PC-9 (cell line): ENCODE measurements at regions of chr3 and their contacts with region 1.

Region 1: GRCh38 chr3:46603416-46604046 is 8.8 kb upstream of the FAM240A start:
- DNase-seq: no peak
- H3K4me3 ChIP-seq: no peak overlapping the region
- H3K27ac ChIP-seq: no peak overlapping the region
- H3K4me1 ChIP-seq: no peaks in the 10 kb centered on the region
- H3K27me3 ChIP-seq: no peaks in the 10 kb centered on the region
- CTCF ChIP-seq: no peak

Region 2: GRCh38 chr3:46619845-46620778 is 16.6 kb after region 1 on chr3:
- CTCF ChIA-PET with region 1: no interaction called
- POLR2A ChIA-PET with region 1: no interaction called
- intact Hi-C with region 1: loop called (anchors 1 kb)
- DNase-seq: no peak
- H3K4me3 ChIP-seq: no peak overlapping the region
- H3K27ac ChIP-seq: no peak overlapping the region
- H3K4me1 ChIP-seq: no peaks in the 10 kb centered on the region
- H3K27me3 ChIP-seq: peaks cover 4% of the 10 kb centered on the region; the same call in 1 of the 2 replicates
- CTCF ChIP-seq: no peak

Region 3: DNA sequence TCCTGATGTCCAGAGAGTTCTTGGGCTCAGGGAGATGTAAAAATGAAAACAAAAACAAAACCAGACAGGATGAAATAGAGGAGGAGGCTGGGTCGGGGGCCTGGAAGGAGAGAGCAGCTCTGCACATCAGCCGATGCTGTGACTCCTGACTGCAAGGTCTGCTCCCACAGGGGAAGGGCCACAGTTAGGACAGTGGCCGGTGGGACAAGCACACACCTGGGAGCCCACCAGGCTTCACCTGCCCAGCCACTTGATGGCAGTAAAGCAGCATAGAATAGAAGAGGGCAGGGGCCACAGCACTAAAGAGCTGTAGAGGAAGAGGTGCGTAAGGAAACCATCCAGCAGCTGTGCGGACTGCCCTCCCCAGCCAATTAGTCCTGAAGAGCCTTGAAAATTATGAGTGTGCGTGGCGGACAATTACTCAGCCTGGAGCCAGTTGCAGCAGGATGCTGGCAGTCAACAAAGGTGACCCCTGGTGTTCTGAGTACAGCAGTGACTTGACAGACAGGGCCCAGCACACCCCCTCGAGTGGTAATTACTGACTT is 60.1 kb after region 1 on chr3:
- CTCF ChIA-PET with region 1: no interaction called
- POLR2A ChIA-PET with region 1: no interaction called
- intact Hi-C with region 1: no loop called
- DNase-seq: no peak
- H3K4me3 ChIP-seq: no peak overlapping the region
- H3K27ac ChIP-seq: no peak overlapping the region
- H3K4me1 ChIP-seq: peaks cover 28% of the 10 kb centered on the region
- H3K27me3 ChIP-seq: no peaks in the 10 kb centered on the region
- CTCF ChIP-seq: peak; percentile 51; the same call in 1 of the 2 replicates